ENCODE measurements at regions of chr10 and their contacts with region 1.

Region 1: GRCh38 chr10:102835007-102835482 is 2.2 kb downstream of the CYP17A1 start:
- DNase-seq: peak; percentile 46 to 83 (median 77)
- ATAC-seq: peak; percentile 98
- H3K4me3 ChIP-seq: no peak overlapping the region
- H3K4me3 Mint-ChIP-seq: no peak overlapping the region
- H3K27ac ChIP-seq: no peak overlapping the region
- H3K27ac Mint-ChIP-seq: no peak overlapping the region
- H3K4me1 ChIP-seq: no peaks in the 10 kb centered on the region
- H3K4me1 Mint-ChIP-seq: no peaks in the 10 kb centered on the region
- H3K27me3 ChIP-seq: peaks cover 0 to 3% of the 10 kb centered on the region in 2 experiments
- H3K27me3 Mint-ChIP-seq: peaks cover 2% of the 10 kb centered on the region
- CTCF ChIP-seq: peak; percentile 80

Region 2: GRCh38 chr10:102467971-102468438 is 367.0 kb before region 1 on chr10:
- CTCF ChIA-PET with region 1: no interaction called
- POLR2A ChIA-PET with region 1: no interaction called
- intact Hi-C with region 1: no loop called
- DNase-seq: no peak
- ATAC-seq: no peak
- H3K4me3 ChIP-seq: no peak overlapping the region
- H3K4me3 Mint-ChIP-seq: no peak overlapping the region
- H3K27ac ChIP-seq: no peak overlapping the region
- H3K27ac Mint-ChIP-seq: no peak overlapping the region
- H3K4me1 ChIP-seq: peaks cover 7% of the 10 kb centered on the region
- H3K4me1 Mint-ChIP-seq: peaks cover 11% of the 10 kb centered on the region
- H3K27me3 ChIP-seq: no peaks in the 10 kb centered on the region
- H3K27me3 Mint-ChIP-seq: no peaks in the 10 kb centered on the region
- CTCF ChIP-seq: no peak

Region 3: DNA sequence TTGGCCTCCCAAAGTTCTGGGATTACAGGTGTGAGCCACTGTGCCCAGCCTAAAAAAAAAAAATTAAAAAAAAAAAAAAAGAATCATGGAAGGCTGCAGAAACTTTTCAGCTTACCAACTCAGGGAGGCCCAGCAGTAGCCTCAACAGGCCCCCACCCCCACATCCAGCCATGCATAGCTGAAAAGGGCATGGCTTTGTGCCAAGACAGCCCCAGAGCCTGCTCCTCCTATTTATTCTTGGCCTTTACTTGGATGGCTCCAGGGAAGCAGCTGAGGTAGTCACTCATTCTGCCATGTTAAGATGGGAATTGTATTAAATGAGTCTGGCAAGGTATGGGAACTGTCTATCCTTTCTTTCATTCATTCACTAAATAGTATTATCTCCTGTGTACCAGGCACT is 69.3 kb after region 1 on chr10:
- CTCF ChIA-PET with region 1: interaction called, 8 read pairs
- POLR2A ChIA-PET with region 1: no interaction called
- intact Hi-C with region 1: loop called in 1 of 2 experiments (anchors 1 kb)
- DNase-seq: no peak
- ATAC-seq: no peak
- H3K4me3 ChIP-seq: no peak overlapping the region
- H3K4me3 Mint-ChIP-seq: no peak overlapping the region
- H3K27ac ChIP-seq: no peak overlapping the region
- H3K27ac Mint-ChIP-seq: no peak overlapping the region
- H3K4me1 ChIP-seq: no peaks in the 10 kb centered on the region
- H3K4me1 Mint-ChIP-seq: no peaks in the 10 kb centered on the region
- H3K27me3 ChIP-seq: no peaks in the 10 kb centered on the region
- H3K27me3 Mint-ChIP-seq: no peaks in the 10 kb centered on the region
- CTCF ChIP-seq: no peak

Region 4: DNA sequence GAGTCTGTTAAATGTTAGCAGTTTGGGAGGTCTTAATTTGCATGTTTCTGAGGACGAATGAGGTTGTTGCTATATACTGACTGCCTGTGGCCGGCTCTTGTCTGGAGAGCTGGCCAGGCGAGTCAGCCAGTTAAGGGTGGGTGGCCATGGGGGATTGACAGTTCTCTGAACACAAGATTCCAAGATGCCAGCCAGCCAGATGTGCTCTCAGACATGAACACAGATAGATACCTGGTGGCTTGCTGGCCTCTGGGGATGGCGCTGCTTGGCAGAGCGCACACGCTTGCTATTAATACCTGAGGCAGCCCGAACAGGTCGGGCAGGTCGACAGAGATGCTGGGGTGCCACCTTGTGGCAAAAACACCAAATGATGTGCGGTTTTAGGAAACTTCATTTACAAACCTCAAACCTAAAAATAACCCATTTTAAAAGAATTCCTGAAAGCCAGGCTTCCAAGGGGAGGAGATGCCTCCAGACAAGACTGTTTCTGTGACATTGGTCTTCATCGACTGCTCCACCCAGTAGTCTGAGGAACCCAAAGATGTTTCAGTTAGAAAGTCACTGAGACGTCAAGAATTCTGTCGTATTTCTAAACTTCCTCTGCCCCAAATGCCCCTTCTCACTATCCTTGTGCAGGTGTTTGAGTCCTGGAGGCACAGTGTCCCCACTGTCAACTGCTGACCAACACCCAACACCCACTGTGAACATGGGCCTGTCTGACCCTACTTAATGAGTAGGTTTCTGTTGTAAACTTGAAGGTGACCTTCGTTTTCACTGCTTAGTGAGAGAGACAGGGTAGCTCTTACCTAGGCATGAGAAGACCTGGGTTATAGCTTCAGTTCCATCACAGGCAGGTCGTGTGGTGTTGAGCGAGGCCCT is 234.6 kb after region 1 on chr10:
- CTCF ChIA-PET with region 1: interaction called, 13 read pairs
- POLR2A ChIA-PET with region 1: no interaction called
- intact Hi-C with region 1: loop called in 1 of 2 experiments (anchors 1 kb)
- DNase-seq: peak; percentile 45 to 85 (median 75)
- ATAC-seq: peak; percentile 96
- H3K4me3 ChIP-seq: no peak overlapping the region
- H3K4me3 Mint-ChIP-seq: peak overlapping the region; percentile 26
- H3K27ac ChIP-seq: peak overlapping the region in 1 of 2 experiments; percentile 21
- H3K27ac Mint-ChIP-seq: peak overlapping the region; percentile 66
- H3K4me1 ChIP-seq: peaks cover 20% of the 10 kb centered on the region
- H3K4me1 Mint-ChIP-seq: peaks cover 27% of the 10 kb centered on the region
- H3K27me3 ChIP-seq: no peaks in the 10 kb centered on the region
- H3K27me3 Mint-ChIP-seq: no peaks in the 10 kb centered on the region
- CTCF ChIP-seq: peak; percentile 75

Region 5: DNA sequence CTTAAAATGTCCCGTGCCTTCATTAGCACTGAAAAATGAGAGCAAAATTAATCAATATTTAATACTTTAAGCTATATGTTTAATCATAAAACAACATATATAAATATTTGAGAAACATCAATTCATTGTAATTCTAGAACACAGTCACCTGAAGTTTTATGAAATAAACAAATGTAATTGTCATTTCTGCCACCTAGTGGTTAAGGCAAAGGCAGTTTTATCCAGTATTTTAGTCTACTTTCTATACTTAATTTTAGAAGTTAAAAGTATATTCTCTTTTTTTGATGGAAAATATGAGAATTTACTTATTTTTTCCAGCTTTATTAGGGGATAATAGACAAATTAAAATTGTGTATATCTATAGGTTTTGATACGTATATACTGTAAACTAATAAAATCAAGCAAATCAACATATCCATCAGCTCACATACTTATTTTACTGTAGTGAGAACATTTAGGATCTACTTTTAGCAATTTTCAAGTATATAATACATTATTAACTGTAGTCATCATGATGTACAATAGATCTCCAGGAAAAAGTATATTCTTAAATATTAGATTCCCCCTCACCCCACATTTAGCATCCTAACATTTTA is 499.0 kb after region 1 on chr10:
- CTCF ChIA-PET with region 1: interaction called, 7 read pairs
- POLR2A ChIA-PET with region 1: no interaction called
- intact Hi-C with region 1: loop called in 1 of 2 experiments (anchors 1 kb)
- DNase-seq: peak in 2 of 9 experiments; percentile 20 to 45
- ATAC-seq: no peak
- H3K4me3 ChIP-seq: no peak overlapping the region
- H3K4me3 Mint-ChIP-seq: no peak overlapping the region
- H3K27ac ChIP-seq: no peak overlapping the region
- H3K27ac Mint-ChIP-seq: no peak overlapping the region
- H3K4me1 ChIP-seq: no peaks in the 10 kb centered on the region
- H3K4me1 Mint-ChIP-seq: no peaks in the 10 kb centered on the region
- H3K27me3 ChIP-seq: no peaks in the 10 kb centered on the region
- H3K27me3 Mint-ChIP-seq: no peaks in the 10 kb centered on the region
- CTCF ChIP-seq: peak; percentile 80